H1 (cell line): ENCODE measurements at regions of chr2 and their contacts with region 1.

Region 1: GRCh38 chr2:181953881-181954537 is 31.6 kb upstream of the PPP1R1C start:
- DNase-seq: peak; percentile 67 to 82
- H3K4me3 ChIP-seq: peak overlapping the region; percentile 6 to 61 (median 20); a peak in 7 of 8 replicates
- H3K27ac ChIP-seq: no peak overlapping the region
- H3K4me1 ChIP-seq: no peaks in the 10 kb centered on the region
- H3K27me3 ChIP-seq: peaks cover 0 to 2% (median 0%) of the 10 kb centered on the region in 4 experiments; a peak in 1 of 7 replicates
- CTCF ChIP-seq: peak; percentile 13 to 72 (median 59)
- EP300 ChIP-seq: no peak
- POLR2A ChIP-seq: no peak
- RAD21 ChIP-seq: peak; percentile 39 to 45

Region 2: DNA sequence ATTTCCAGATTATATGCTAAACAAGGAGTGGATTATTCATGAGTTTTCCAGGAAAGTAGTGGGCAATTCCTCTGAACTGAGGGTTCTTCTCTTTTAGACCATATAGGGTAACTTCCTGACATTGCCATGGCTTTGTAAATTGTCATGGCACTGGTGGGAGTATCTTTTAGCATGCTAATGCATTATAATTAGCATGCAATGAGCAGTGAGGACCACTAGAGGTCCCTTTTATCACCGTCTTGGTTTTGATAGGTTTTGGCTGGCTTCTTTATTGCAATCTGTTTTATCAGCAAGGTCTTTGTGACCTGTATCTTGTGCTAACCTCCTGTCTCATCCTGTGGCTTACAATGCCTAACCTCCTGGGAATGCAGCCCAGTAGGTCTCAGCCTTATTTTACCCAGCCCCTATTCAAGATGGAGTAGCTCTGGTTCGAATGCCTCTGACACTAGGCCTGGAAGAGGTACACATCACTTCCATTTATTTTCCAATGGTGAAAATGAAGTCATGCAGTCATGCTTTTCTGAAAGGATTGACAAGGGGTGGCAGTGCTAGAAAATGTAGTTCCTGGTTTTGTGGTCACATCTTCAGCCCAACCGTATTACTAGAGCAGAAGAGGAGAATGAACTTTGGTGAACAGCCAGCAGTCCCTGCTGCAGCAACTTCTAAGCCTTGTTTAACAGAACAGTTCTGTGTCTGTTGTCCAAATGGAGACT is 523.4 kb before region 1 on chr2:
- CTCF ChIA-PET with region 1: no interaction called
- POLR2A ChIA-PET with region 1: no interaction called
- DNase-seq: no peak
- H3K4me3 ChIP-seq: no peak overlapping the region
- H3K27ac ChIP-seq: no peak overlapping the region
- H3K4me1 ChIP-seq: no peaks in the 10 kb centered on the region
- H3K27me3 ChIP-seq: no peaks in the 10 kb centered on the region; a peak in 1 of 7 replicates
- CTCF ChIP-seq: peak in 2 of 3 experiments; percentile 28 to 43; a peak in 3 of 4 replicates
- EP300 ChIP-seq: no peak
- POLR2A ChIP-seq: no peak
- RAD21 ChIP-seq: peak in 1 of 2 experiments; percentile 28; a peak in 2 of 4 replicates

Region 3: GRCh38 chr2:181937473-181937872 is 16.5 kb before region 1 on chr2:
- CTCF ChIA-PET with region 1: interaction called, 13 read pairs
- POLR2A ChIA-PET with region 1: no interaction called
- DNase-seq: no peak
- H3K4me3 ChIP-seq: no peak overlapping the region
- H3K27ac ChIP-seq: no peak overlapping the region
- H3K4me1 ChIP-seq: no peaks in the 10 kb centered on the region
- H3K27me3 ChIP-seq: no peaks in the 10 kb centered on the region
- CTCF ChIP-seq: no peak
- EP300 ChIP-seq: no peak
- POLR2A ChIP-seq: no peak
- RAD21 ChIP-seq: no peak